Common myeloid progenitor, CD34-positive (primary cell): ENCODE measurements at regions of chr11 and their contacts with region 1.

Region 1: GRCh38 chr11:3807909-3808860 is at the start of gene PGAP2:
- DNase-seq: peak; percentile 57 to 70 (median 65)
- H3K4me3 ChIP-seq: peak within 1 kb of the TSS; percentile 71 to 98 (median 91)
- H3K27ac ChIP-seq: peak within 1 kb of the TSS; percentile 46 to 82
- H3K4me1 ChIP-seq: peaks cover 0 to 19% (median 12%) of the 10 kb centered on the region in 4 experiments
- H3K27me3 ChIP-seq: no peaks in the 10 kb centered on the region

Region 2: GRCh38 chr11:3753110-3753509 is 55.1 kb before region 1 on chr11:
- CTCF ChIA-PET with region 1: interaction called, 34 read pairs
- POLR2A ChIA-PET with region 1: no interaction called
- DNase-seq: no peak
- H3K4me3 ChIP-seq: no peak overlapping the region
- H3K27ac ChIP-seq: no peak overlapping the region
- H3K4me1 ChIP-seq: no peaks in the 10 kb centered on the region
- H3K27me3 ChIP-seq: no peaks in the 10 kb centered on the region

Region 3: DNA sequence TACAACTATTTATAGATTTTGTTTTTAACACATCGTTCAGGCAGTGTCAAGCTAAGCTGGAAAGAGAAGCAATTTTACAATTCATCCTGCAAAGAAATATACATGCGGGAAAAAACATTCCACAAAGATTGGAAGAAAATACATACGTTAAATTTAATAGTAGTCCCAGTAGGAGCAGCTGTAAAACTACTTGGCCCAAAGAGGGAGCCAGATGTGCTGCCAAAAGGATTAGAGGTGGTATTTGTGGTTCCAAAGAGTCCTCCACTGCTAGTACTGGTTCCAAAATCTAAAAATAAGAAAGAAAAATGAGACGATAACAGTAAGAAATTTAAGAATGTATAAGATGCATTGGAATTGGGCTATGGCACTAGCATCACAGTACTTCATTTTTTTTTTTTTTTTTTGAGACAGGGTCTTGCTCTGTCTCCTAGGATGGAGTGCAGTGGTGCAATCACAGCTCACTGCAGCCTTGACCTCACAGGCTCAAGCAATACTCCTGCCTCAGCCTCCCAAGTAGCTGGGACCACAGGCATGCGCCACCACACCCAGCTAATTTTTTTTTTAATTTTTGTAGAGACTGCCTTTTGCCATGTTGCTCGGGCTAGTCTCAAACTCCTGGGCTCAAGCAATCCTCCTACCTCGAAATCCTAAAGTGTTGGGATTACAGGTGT is 32.3 kb before region 1 on chr11:
- CTCF ChIA-PET with region 1: interaction called, 136 read pairs
- POLR2A ChIA-PET with region 1: interaction called, 3 read pairs
- DNase-seq: no peak
- H3K4me3 ChIP-seq: no peak overlapping the region
- H3K27ac ChIP-seq: no peak overlapping the region
- H3K4me1 ChIP-seq: peaks cover 0 to 6% (median 4%) of the 10 kb centered on the region in 4 experiments
- H3K27me3 ChIP-seq: no peaks in the 10 kb centered on the region

Region 4: DNA sequence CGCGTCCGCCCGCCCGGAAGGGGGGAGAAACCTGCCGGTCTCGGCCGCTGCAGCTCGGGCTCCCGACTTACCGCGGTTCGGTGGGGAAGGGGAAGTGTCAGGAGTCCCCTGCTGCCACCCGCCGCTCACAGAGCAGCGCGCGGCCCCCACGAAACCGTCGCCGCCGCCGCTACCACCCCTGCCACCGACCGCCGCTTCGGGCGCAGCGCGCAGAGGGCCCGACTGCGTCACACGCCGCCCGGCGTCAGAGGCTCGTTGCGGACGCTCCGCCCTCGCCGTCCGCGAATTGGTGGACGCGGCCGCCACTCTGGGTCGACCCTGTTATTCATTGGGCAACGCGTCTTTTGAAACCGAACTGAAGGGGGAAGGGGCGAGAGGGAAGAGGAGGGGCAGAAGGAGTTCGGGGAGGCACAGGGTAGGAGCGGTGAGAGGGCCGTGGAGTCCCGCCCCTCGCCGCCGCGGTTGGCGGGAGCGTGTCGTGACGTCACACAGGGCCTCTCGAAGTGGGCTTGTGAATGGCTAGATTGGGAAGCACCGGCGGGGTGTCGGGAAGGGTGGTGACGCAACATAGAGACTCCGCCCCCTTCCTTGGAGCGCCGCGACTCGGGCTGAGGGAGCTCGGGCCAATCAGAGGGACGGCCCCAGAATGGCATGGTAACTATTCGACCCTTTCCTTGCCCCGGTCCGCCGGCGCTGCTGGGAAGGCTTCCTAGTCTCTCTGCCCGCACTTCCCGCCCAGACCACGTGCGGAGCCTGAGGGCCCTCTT is 10.7 kb before region 1 on chr11 and contains the start of gene NUP98:
- CTCF ChIA-PET with region 1: interaction called, 49 read pairs
- POLR2A ChIA-PET with region 1: interaction called, 9 read pairs
- DNase-seq: peak; percentile 100
- H3K4me3 ChIP-seq: peak within 1 kb of the TSS; percentile 70 to 95 (median 91)
- H3K27ac ChIP-seq: peak within 1 kb of the TSS; percentile 94 to 99
- H3K4me1 ChIP-seq: peaks cover 9 to 35% (median 26%) of the 10 kb centered on the region in 4 experiments
- H3K27me3 ChIP-seq: no peaks in the 10 kb centered on the region

Region 5: DNA sequence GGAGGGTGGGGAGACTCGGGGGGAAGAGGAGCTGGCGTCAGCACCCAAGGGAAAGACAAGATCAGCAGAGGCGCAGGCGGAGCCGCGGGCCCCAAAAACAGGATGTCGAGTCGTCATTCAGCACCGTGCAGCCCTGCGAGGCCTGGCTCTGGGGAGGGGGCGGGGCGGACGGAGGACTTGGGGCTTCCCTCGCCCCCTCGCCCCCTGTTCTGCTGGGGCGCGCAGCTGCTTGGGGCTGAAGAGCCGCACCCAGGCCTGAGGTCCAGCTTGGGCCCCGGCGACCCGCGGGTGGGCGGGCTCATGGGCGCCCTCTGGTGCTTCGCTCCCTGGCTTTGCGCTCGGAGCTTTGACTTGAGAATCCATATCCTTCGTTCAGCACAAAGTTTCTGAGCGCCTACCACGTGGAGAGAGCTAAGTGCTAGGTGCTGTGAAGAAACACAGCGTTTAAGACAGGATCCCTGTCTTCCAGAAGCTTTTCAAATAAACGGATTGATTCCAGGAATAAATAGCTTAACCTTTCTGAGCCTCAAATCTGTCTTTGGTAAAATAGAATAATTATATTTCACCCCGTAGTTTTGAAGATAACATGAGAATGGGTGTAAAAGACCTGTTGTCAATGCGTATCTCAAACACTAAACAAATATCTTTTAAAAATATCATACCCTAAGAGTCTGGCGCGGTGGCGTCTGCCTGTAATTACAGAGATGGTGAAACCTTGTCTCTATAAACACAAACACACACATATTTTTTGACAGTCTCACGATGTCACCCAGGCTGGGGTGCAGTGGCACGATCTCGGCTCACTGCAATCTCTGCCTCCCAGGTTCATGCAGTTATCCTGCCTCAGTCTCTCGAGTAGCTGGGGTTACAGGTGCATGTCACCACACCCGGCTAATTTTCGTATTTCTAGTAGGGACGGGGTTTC is 33.5 kb after region 1 on chr11:
- CTCF ChIA-PET with region 1: interaction called, 18 read pairs
- POLR2A ChIA-PET with region 1: no interaction called
- DNase-seq: peak; percentile 95 to 99 (median 98)
- H3K4me3 ChIP-seq: peak overlapping the region in 6 of 7 experiments; percentile 40 to 89 (median 57)
- H3K27ac ChIP-seq: peak overlapping the region; percentile 88 to 92
- H3K4me1 ChIP-seq: peaks cover 20 to 44% (median 42%) of the 10 kb centered on the region in 4 experiments
- H3K27me3 ChIP-seq: no peaks in the 10 kb centered on the region